Caco-2 (cell line): ENCODE measurements at regions of chr17 and their contacts with region 1.

Region 1: DNA sequence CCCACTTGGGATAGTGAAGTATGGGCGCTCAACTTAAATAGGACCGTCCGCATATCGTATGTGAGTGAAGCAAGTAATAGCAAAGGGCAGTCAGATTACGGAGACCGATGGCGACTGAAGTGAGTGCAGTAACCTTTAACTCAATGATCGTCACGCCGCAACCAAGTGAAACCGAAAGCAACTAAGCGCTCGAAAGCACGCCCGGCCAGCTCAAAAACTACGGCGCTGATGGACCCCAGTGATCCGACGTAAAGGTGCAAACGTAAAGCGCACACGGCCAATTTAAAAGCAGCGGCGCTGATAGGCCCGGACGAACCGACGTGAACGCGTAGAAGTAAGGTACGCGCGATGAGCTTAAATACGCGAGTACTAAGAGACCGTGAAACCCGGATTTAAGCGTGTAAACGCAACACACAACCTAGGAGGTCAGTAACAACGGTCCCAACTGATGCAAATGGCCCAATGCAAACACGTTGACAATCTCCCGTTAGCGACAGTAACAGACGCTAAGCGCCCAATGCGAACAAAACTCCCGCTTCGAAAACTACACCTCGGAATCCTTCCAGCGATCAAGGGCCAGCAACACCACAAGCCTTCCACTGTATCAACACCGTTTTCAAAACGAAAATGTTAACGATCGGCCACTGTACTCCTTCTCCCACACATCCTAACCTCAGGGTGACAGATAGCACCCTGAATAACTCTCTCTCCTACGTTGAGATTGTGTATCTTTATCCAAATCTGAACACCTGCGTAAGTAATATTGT is 37.9 kb upstream of the ARL4D start:
- DNase-seq: peak; percentile 95 to 99
- H3K4me3 ChIP-seq: peak overlapping the region; percentile 36
- H3K4me3 Mint-ChIP-seq: peak overlapping the region; percentile 70
- H3K27ac Mint-ChIP-seq: peak overlapping the region; percentile 99
- H3K4me1 ChIP-seq: peaks cover 14% of the 10 kb centered on the region
- H3K4me1 Mint-ChIP-seq: peaks cover 31% of the 10 kb centered on the region
- H3K27me3 ChIP-seq: no peaks in the 10 kb centered on the region
- H3K27me3 Mint-ChIP-seq: peaks cover 2% of the 10 kb centered on the region
- CTCF ChIP-seq: no peak

Region 2: DNA sequence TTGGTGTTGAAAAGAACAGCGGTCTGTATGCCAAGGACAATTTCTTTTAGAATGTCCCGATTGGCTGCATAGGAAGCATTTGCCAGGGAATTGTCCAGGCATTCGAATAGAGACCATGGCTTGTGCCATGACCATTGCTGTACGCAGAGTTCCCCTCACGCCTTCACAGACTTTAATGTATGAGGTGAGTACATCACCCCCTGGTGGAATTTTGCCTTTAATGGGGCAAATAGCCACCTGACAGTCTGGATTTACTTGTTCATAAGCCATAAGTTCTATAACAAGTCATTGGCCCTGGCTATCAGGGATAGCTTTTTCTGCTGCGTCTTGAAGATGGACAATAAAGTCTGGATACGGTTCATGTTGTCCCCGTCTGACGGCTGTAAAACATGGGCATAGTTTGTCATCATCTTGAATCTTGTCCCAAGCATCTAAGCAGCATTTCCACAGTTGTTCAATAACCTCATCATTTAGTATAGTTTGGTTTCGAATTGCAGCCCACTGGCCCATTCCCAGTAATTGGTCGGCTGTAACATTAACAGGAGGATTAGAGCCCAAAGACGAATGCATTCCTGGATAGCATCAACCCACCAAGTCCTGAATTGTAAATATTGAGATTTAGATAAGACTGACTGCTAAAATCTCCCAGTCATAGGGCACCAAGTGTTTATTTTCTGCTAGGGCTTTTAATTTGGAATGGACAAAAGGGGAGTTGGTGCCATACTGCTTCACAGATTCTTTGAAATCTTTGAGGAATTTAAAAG is 29.9 kb before region 1 on chr17:
- CTCF ChIA-PET with region 1: interaction called, 5 read pairs
- POLR2A ChIA-PET with region 1: interaction called, 30 read pairs
- intact Hi-C with region 1: loop called (anchors 2 kb)
- DNase-seq: peak in 1 of 2 experiments; percentile 62
- H3K4me3 ChIP-seq: no peak overlapping the region
- H3K4me3 Mint-ChIP-seq: no peak overlapping the region
- H3K27ac Mint-ChIP-seq: peak overlapping the region; percentile 66
- H3K4me1 ChIP-seq: peaks cover 70% of the 10 kb centered on the region
- H3K4me1 Mint-ChIP-seq: peaks cover 72% of the 10 kb centered on the region
- H3K27me3 ChIP-seq: no peaks in the 10 kb centered on the region
- H3K27me3 Mint-ChIP-seq: no peaks in the 10 kb centered on the region
- CTCF ChIP-seq: peak; percentile 43 to 48

Region 3: DNA sequence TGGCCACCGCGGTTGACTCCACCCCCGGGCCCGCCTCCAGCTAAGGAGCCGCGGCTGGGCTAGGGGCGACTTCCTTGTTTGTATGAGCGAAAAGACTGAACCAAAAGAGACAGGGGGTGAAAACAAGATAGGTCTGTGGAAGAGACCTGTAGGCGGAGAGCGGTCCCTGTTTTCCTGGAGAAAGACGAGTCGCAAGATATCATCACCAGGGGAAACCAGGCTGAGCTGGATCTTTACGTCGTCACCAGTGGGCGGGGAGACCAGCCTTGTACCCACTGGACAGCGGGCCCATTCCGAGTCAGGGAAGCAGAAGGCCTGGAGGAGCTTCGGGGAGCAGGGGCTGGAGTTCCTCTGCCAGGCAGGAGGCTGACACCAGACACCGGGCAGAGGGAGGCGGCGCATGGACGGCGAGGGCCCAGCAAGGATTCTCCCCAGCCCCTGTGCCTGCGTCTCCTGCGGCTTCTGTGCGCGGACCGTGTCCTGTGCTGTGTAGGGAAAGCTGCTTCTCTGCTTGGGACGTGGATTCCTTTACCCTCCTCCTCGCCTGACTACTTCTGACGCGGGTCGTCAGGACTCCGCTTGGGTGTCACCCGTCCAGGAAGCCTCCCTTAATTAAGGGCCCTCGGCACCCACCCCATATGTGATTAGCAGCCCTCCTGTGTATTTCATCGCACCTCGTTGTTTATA is 27.6 kb after region 1 on chr17:
- CTCF ChIA-PET with region 1: interaction called, 11 read pairs
- POLR2A ChIA-PET with region 1: interaction called, 64 read pairs
- intact Hi-C with region 1: no loop called
- DNase-seq: peak; percentile 93 to 96
- H3K4me3 ChIP-seq: peak overlapping the region; percentile 72
- H3K4me3 Mint-ChIP-seq: peak overlapping the region; percentile 87
- H3K27ac Mint-ChIP-seq: peak overlapping the region; percentile 96
- H3K4me1 ChIP-seq: peaks cover 19% of the 10 kb centered on the region; the same call in 1 of the 2 replicates
- H3K4me1 Mint-ChIP-seq: peaks cover 25% of the 10 kb centered on the region
- H3K27me3 ChIP-seq: no peaks in the 10 kb centered on the region
- H3K27me3 Mint-ChIP-seq: no peaks in the 10 kb centered on the region
- CTCF ChIP-seq: no peak

Region 4: DNA sequence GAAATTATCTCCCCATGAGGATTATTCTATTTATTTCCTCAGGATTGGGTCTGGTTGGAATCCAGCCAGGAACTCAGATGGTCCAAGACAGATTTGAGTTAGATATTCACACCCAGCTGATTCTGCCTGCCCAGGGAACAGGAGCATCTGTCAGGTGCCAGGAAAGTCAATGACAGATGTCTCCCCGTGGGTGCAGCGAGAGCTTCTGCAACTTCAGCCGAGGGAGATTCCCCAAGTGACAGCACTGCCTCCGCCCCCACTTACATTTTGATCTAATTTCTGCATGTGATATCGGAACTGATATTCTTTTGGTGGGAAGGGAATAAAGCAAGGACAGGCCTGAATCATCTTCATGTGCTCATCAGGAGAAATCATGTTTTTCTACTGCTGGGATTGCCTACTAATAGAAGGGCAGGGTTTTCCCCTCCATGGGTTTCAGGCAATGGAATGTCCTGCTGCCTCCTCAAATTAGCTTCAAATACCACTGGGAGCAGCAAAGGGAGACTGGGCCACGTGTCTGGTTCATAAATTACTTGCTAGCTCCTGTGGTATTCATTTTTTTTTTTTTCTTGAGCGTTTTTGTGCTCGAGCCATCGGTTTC is 107.2 kb after region 1 on chr17:
- CTCF ChIA-PET with region 1: no interaction called
- POLR2A ChIA-PET with region 1: interaction called, 12 read pairs
- intact Hi-C with region 1: no loop called
- DNase-seq: no peak
- H3K4me3 ChIP-seq: no peak overlapping the region
- H3K4me3 Mint-ChIP-seq: no peak overlapping the region
- H3K27ac Mint-ChIP-seq: peak overlapping the region; percentile 39
- H3K4me1 ChIP-seq: peaks cover 27% of the 10 kb centered on the region
- H3K4me1 Mint-ChIP-seq: peaks cover 20% of the 10 kb centered on the region
- H3K27me3 ChIP-seq: no peaks in the 10 kb centered on the region
- H3K27me3 Mint-ChIP-seq: no peaks in the 10 kb centered on the region
- CTCF ChIP-seq: no peak